ENCODE measurements at regions of chr20 and their contacts with region 1.

Region 1: GRCh38 chr20:44960103-44960852 is at the start of gene TOMM34:
- DNase-seq: peak; percentile 94
- H3K4me3 Mint-ChIP-seq: peak within 1 kb of the TSS; percentile 76
- H3K27ac Mint-ChIP-seq: peak within 1 kb of the TSS; percentile 43
- H3K4me1 Mint-ChIP-seq: peaks cover 45% of the 10 kb centered on the region
- H3K27me3 Mint-ChIP-seq: no peaks in the 10 kb centered on the region
- CTCF ChIP-seq: no peak
- total RNA-seq, gene TOMM34: 55.5 and 60.0 TPM in 2 replicates

Region 2: DNA sequence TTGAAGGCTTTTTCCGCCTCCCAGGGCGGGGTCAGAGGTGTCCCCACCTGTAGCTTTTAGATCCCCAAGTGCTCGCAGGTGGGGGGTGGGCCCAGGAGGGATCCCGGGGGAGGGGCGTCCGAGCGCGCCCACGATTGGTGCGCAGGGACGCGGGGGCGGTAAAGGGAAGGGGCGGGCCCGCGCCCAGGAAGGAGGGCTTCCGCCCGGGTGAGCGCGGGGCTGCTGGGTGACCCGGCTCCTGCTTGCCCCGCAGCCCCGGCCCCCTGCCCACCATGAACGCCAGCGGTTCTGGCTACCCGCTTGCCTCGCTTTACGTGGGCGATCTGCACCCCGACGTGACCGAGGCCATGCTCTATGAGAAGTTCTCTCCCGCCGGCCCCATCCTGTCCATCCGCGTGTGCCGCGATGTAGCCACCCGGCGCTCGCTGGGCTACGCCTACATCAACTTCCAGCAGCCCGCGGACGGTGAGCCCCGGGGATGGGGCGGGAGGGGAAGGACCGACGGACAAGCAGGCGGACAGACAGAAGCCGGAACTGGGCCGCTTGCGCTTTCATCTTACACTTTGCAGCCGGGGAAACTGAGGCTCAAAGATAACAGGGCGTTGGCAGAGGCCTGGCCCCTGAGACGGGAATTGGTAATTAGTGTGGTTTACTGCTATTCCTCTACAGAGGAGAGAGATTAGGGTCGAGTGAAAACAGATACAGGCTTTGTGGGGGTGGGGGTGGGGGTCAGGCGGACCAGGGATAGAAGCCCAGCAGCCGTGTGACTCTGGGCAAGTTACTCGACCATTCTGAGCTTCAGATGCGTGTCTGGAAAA is 50.2 kb before region 1 on chr20 and contains the start of gene PABPC1L:
- CTCF ChIA-PET with region 1: interaction called, 5 read pairs
- POLR2A ChIA-PET with region 1: interaction called, 33 read pairs
- intact Hi-C with region 1: no loop called
- DNase-seq: peak; percentile 77
- H3K4me3 Mint-ChIP-seq: peak within 1 kb of the TSS; percentile 83
- H3K27ac Mint-ChIP-seq: peak within 1 kb of the TSS; percentile 46
- H3K4me1 Mint-ChIP-seq: no peaks in the 10 kb centered on the region
- H3K27me3 Mint-ChIP-seq: no peaks in the 10 kb centered on the region
- CTCF ChIP-seq: no peak
- total RNA-seq, gene PABPC1L: 150 and 182 TPM in 2 replicates

Region 3: GRCh38 chr20:44942264-44942973 is 17.9 kb before region 1 on chr20:
- CTCF ChIA-PET with region 1: interaction called, 4 read pairs
- POLR2A ChIA-PET with region 1: interaction called, 29 read pairs
- intact Hi-C with region 1: no loop called
- DNase-seq: no peak
- H3K4me3 Mint-ChIP-seq: no peak overlapping the region
- H3K27ac Mint-ChIP-seq: no peak overlapping the region
- H3K4me1 Mint-ChIP-seq: no peaks in the 10 kb centered on the region
- H3K27me3 Mint-ChIP-seq: no peaks in the 10 kb centered on the region
- CTCF ChIP-seq: no peak

Region 4: DNA sequence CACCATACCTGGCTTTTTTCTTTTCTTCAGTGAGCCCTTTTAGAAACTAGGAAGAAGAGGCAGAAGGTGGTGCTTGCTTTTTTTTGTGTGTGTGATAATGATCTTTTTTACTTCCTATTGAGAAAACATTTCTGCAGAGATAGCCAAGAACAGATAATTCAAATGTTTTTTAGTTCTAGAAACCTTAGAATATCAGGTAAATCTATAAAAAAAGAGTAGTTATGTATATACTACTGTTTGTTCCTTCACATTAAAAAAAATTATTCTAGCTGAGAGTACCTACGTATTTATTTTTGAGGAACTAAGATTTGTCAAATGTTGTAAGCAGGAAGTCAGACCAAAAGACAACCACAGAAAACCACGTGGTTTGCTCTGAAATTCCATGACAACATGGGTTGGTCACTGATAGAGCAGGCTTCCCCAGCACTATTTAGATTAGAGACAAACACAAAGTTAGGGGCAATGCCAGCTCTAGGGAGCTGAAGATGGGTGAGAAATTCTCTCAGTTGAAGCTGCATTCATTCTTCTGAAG is 18.9 kb after region 1 on chr20:
- CTCF ChIA-PET with region 1: interaction called, 9 read pairs
- POLR2A ChIA-PET with region 1: interaction called, 28 read pairs
- intact Hi-C with region 1: no loop called
- DNase-seq: no peak
- H3K4me3 Mint-ChIP-seq: no peak overlapping the region
- H3K27ac Mint-ChIP-seq: no peak overlapping the region
- H3K4me1 Mint-ChIP-seq: peaks cover 8% of the 10 kb centered on the region
- H3K27me3 Mint-ChIP-seq: no peaks in the 10 kb centered on the region
- CTCF ChIP-seq: no peak

Region 5: DNA sequence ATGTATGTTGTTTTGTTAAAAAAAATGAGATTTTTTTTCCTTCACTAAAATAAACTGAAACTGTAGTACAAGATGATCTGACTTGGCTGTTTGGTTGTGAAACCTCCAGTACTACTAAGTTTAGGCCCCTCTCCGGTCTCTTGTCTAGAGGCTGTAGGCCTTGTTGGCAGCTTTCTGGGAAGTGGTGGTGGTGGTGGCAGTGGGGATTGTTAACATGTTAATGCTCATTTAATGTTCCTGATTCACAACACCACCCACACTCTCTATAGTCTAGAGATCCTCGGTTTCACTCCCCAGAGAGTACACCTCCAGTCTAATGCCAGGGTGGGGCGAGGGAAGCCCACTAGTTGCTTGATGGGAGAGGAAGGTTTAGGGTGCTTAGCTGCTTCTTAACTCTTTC is 30.1 kb after region 1 on chr20:
- CTCF ChIA-PET with region 1: no interaction called
- POLR2A ChIA-PET with region 1: interaction called, 16 read pairs
- intact Hi-C with region 1: no loop called
- DNase-seq: no peak
- H3K4me3 Mint-ChIP-seq: no peak overlapping the region
- H3K27ac Mint-ChIP-seq: peak overlapping the region; percentile 67
- H3K4me1 Mint-ChIP-seq: peaks cover 19% of the 10 kb centered on the region
- H3K27me3 Mint-ChIP-seq: no peaks in the 10 kb centered on the region
- CTCF ChIP-seq: no peak